T-cell (primary cell): ENCODE measurements at regions of chrX and their contacts with region 1.

Region 1: GRCh38 chrX:40227125-40227524 is 129.4 kb upstream of the BCOR start:
- DNase-seq: no peak
- ATAC-seq: no peak
- H3K4me3 ChIP-seq: no peak overlapping the region
- H3K4me3 Mint-ChIP-seq: no peak overlapping the region
- H3K27ac ChIP-seq: no peak overlapping the region
- H3K27ac Mint-ChIP-seq: no peak overlapping the region
- H3K4me1 ChIP-seq: no peaks in the 10 kb centered on the region
- H3K4me1 Mint-ChIP-seq: no peaks in the 10 kb centered on the region
- H3K27me3 ChIP-seq: no peaks in the 10 kb centered on the region
- H3K27me3 Mint-ChIP-seq: no peaks in the 10 kb centered on the region

Region 2: GRCh38 chrX:38837389-38837788 is 1389.7 kb before region 1 on chrX:
- CTCF ChIA-PET with region 1: no interaction called
- POLR2A ChIA-PET with region 1: no interaction called
- DNase-seq: no peak
- ATAC-seq: no peak
- H3K4me3 ChIP-seq: no peak overlapping the region
- H3K4me3 Mint-ChIP-seq: no peak overlapping the region
- H3K27ac ChIP-seq: no peak overlapping the region
- H3K27ac Mint-ChIP-seq: no peak overlapping the region
- H3K4me1 ChIP-seq: no peaks in the 10 kb centered on the region
- H3K4me1 Mint-ChIP-seq: peaks cover 5 to 6% (median 6%) of the 10 kb centered on the region in 3 donors
- H3K27me3 ChIP-seq: no peaks in the 10 kb centered on the region
- H3K27me3 Mint-ChIP-seq: no peaks in the 10 kb centered on the region

Region 3: GRCh38 chrX:40237731-40238178 is 10.6 kb after region 1 on chrX:
- CTCF ChIA-PET with region 1: no interaction called
- POLR2A ChIA-PET with region 1: interaction called in 1 of 2 experiments, 10 read pairs
- DNase-seq: peak in 1 of 35 experiments; percentile 4
- ATAC-seq: no peak
- H3K4me3 ChIP-seq: no peak overlapping the region
- H3K4me3 Mint-ChIP-seq: no peak overlapping the region
- H3K27ac ChIP-seq: no peak overlapping the region
- H3K27ac Mint-ChIP-seq: no peak overlapping the region
- H3K4me1 ChIP-seq: no peaks in the 10 kb centered on the region
- H3K4me1 Mint-ChIP-seq: peaks cover 0 to 5% (median 3%) of the 10 kb centered on the region in 3 donors
- H3K27me3 ChIP-seq: no peaks in the 10 kb centered on the region
- H3K27me3 Mint-ChIP-seq: peaks cover 0 to 3% of the 10 kb centered on the region in 2 donors